AG04450 (cell line): ENCODE measurements at regions of chr17 and their contacts with region 1.

Region 1: GRCh38 chr17:76278952-76279741 is 14.0 kb downstream of the UBALD2 start:
- DNase-seq: peak; percentile 50
- H3K4me3 ChIP-seq: no peak overlapping the region
- H3K27ac ChIP-seq: no peak overlapping the region
- H3K27me3 ChIP-seq: no peaks in the 10 kb centered on the region
- CTCF ChIP-seq: peak; percentile 95

Region 2: GRCh38 chr17:76014184-76014924 is 264.8 kb before region 1 on chr17:
- CTCF ChIA-PET with region 1: interaction called, 20 read pairs
- POLR2A ChIA-PET with region 1: no interaction called
- DNase-seq: no peak
- H3K4me3 ChIP-seq: no peak overlapping the region
- H3K27ac ChIP-seq: no peak overlapping the region
- H3K27me3 ChIP-seq: peaks cover 11% of the 10 kb centered on the region
- CTCF ChIP-seq: peak; percentile 95

Region 3: DNA sequence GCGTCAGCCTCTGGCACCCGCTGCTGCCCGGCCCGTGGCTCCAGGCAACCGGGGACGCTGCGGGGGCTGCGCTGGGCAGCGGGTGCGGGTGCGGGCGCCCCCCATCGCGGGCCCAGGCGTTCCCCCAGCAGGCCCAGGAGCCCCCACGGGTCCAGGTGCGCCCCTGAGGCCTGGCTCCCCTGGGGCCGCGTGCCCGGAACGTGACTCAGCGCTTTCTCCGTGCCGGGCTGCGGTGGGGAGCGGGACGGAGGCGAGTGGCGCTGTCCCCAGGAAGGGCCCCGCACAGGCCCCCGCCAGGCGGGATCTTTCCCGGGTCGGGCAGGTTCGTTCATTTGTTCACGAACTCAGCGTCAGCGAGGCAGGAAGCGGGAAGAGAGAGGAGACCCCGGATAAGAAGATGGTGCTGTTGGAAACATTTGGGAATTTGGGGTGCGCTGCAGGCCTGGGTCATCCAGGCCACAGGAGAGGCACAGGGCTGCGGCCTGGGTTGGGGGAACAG is 157.2 kb before region 1 on chr17:
- CTCF ChIA-PET with region 1: interaction called, 92 read pairs
- POLR2A ChIA-PET with region 1: interaction called, 5 read pairs
- DNase-seq: no peak
- H3K4me3 ChIP-seq: no peak overlapping the region
- H3K27ac ChIP-seq: no peak overlapping the region
- H3K27me3 ChIP-seq: peaks cover 5% of the 10 kb centered on the region
- CTCF ChIP-seq: no peak

Region 4: DNA sequence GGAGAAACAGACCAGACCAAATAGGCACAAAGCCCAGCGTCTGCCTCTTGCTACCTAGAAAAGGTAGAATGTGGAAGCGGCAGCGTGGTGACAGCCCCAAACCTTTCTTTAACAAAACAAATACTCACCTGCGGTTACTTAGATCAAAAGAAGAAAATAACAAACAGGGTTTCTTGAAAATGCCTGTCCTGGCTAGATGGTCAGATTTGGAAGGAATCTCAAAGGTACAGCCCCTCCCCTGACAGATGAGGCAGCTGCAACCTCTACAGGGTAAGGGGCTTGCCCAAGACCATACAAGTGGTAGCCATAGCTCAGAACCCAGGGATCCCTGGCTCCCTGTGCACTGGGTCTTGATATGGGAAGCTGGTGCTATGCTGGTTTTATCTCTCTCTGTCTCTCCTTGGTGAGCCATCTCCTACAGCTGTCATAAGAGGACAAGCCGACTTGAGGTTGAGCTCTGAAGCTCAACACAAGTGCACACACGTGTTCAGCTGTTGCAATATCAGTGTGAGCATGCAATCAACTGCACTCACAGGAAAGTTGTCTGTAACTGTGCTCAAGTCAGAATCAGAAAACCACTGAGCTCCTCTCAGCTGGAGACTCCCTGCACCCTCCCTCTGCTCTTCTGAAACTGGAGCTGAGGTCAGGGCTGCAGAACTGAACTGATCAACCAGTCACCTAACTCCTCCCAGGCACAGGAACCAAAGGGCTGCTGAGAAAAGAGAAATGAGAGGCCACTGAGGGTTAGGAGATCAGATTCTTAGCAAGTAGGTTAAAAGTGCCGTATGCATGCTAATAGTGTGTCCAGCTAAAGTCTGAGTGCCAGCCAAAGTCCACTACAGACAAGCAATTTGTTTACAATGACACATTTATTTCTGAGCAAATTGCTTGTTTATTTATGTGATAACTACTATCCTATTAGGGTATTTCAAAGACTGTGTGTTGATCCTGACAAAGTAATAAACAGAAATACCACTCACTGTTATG is 32.8 kb before region 1 on chr17:
- CTCF ChIA-PET with region 1: interaction called, 13 read pairs
- POLR2A ChIA-PET with region 1: no interaction called
- DNase-seq: no peak
- H3K4me3 ChIP-seq: no peak overlapping the region
- H3K27ac ChIP-seq: no peak overlapping the region
- H3K27me3 ChIP-seq: peaks cover 42% of the 10 kb centered on the region
- CTCF ChIP-seq: no peak

Region 5: DNA sequence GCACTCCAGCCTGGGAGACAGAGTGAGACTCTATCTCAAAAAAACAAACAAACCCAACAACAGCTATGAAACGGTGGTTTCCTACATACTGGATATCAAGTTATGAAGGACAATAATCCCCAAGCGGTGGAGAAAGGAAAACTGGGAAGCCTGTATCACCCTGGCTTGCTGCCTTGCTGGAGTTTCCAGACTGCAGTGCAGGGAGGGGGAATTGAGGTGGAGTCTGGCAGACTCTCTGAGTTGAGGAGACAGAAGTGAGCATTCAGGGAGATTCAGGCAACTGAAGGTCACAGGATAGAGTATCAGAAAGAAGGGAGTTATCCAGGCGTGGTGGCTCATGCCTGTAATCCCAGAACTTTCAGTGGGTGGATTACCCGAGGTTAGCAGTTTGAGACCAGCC is 17.0 kb after region 1 on chr17:
- CTCF ChIA-PET with region 1: interaction called, 13 read pairs
- POLR2A ChIA-PET with region 1: no interaction called
- DNase-seq: no peak
- H3K4me3 ChIP-seq: no peak overlapping the region
- H3K27ac ChIP-seq: no peak overlapping the region
- H3K27me3 ChIP-seq: no peaks in the 10 kb centered on the region
- CTCF ChIP-seq: no peak

Region 6: DNA sequence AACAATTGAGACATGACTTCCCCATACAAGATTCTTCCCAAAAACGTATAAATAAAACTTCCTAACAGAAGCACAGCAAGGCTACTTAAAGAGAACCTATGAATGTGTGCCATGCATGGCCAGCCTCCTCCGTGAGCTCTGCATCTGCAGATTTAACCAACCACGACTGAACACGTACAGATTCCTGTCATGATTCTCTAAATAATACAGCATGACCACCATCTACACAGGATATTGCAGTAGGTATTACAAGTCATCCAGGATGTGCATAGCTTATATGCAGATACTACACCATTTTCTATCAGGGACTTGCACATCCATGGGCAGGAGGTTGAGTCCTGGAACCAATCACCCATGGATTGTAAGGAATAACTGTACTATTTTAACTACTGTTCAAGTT is 30.3 kb after region 1 on chr17:
- CTCF ChIA-PET with region 1: no interaction called
- POLR2A ChIA-PET with region 1: no interaction called
- DNase-seq: no peak
- H3K4me3 ChIP-seq: no peak overlapping the region
- H3K27ac ChIP-seq: no peak overlapping the region
- H3K27me3 ChIP-seq: no peaks in the 10 kb centered on the region
- CTCF ChIP-seq: no peak